Activated B cell treated with CpG ODN at 0.5 μM for 24 hours (primary cell): ENCODE measurements at regions of chr20 and their contacts with region 1.

Region 1: DNA sequence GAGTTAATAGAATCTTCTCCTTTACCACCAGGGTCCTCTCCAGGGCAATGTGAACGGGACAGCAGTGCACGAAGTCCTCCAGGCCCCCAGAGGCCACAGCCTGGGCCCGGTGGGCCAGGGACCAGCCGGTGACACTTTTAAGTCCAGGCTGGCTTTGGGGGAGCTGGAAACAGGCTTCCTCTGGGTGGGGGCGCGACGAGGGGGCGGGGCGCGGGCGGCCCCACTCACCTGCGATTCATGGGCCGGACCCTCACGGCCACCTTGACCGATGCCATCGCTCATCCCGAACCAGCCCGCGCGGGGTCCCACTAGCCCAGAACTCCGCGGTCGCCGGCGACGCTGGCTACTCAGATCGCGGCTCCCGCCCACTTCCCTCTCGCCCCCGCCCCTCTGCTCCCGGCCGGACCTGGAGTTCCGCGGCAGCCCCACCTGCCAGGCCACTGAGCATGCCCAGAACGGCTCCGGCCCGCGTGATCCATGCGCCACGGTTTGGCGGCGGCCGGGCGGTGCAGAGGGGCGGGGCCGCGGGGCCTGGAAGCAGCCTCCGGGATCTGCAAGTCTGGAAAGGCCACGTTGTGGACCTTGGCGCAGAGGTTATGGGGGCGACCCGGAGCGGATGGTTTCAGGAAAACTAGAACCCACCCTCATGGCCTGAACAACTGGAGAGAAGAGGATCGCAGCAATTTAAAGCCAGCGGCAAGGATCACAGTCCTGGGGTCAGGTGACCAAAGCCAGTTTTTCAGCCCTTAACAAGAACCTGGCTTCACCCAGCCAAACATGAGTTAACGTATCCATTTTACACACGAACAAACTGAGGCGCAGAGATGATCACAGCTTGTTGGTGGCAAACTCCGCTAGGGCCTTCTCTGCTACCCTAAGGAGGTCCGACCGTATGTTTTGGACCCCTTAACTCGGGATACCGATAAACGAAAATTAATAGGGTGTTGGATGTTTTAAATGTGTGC is at the start of gene KIF16B:
- DNase-seq: peak; percentile 93
- ATAC-seq: peak; percentile 90
- H3K4me3 Mint-ChIP-seq: peak within 1 kb of the TSS; percentile 94
- H3K27ac Mint-ChIP-seq: peak within 1 kb of the TSS; percentile 69
- H3K4me1 Mint-ChIP-seq: peaks cover 42% of the 10 kb centered on the region
- H3K27me3 Mint-ChIP-seq: no peaks in the 10 kb centered on the region
- CTCF ChIP-seq: no peak
- total RNA-seq, gene KIF16B: 7.2 and 9.1 TPM in 2 replicates

Region 2: DNA sequence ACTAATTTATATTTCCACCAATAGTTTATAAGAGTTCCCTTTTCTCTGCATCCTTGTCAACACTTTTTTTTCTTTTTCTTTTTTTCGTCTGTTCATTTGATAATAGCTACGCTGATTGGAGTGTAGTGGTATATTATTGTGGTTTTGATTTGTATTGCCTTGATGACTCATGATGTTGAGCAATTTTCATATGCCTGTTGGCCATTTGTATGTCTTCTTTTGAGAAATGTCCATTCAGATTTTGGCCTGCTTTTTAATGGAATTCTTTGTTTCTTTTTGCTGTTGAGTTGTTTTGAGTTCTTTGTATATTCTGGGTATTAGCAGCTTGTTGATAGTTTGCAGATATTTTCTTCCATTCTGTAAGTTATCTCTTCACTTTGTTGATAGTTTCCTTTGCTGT is 773.4 kb before region 1 on chr20:
- CTCF ChIA-PET with region 1: no interaction called
- POLR2A ChIA-PET with region 1: no interaction called
- intact Hi-C with region 1: loop called (anchors 10 kb)
- DNase-seq: no peak
- ATAC-seq: no peak
- H3K4me3 Mint-ChIP-seq: no peak overlapping the region
- H3K27ac Mint-ChIP-seq: no peak overlapping the region
- H3K4me1 Mint-ChIP-seq: peaks cover 2% of the 10 kb centered on the region
- H3K27me3 Mint-ChIP-seq: no peaks in the 10 kb centered on the region
- CTCF ChIP-seq: no peak

Region 3: DNA sequence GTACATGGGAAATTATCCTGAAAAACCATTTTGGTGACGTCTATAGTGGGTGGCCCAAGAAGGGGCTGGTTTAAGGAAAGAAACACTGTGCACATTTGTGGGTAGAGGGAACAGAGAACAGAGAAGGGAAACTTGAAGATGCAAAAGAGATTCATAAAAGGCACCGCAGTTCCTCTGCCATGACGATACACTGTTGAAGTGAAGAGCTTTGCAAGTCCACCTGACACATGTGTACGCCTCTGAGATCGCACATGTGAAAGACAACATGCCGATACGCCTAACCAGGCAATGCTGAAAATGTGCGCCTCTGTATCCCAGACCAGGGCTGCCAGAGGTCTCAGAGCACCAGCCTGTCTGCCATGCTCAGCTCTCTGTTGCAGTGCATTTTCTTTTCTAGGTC is 180.9 kb before region 1 on chr20:
- CTCF ChIA-PET with region 1: no interaction called
- POLR2A ChIA-PET with region 1: no interaction called
- intact Hi-C with region 1: loop called (anchors 5 kb)
- DNase-seq: peak; percentile 26
- ATAC-seq: peak; percentile 85
- H3K4me3 Mint-ChIP-seq: peak overlapping the region; percentile 72
- H3K27ac Mint-ChIP-seq: peak overlapping the region; percentile 46
- H3K4me1 Mint-ChIP-seq: peaks cover 40% of the 10 kb centered on the region
- H3K27me3 Mint-ChIP-seq: no peaks in the 10 kb centered on the region
- CTCF ChIP-seq: no peak

Region 4: GRCh38 chr20:16517946-16518783 is 55.1 kb before region 1 on chr20:
- CTCF ChIA-PET with region 1: no interaction called
- POLR2A ChIA-PET with region 1: no interaction called
- intact Hi-C with region 1: loop called (anchors 5 kb)
- DNase-seq: no peak
- ATAC-seq: no peak
- H3K4me3 Mint-ChIP-seq: no peak overlapping the region
- H3K27ac Mint-ChIP-seq: no peak overlapping the region
- H3K4me1 Mint-ChIP-seq: peaks cover 6% of the 10 kb centered on the region
- H3K27me3 Mint-ChIP-seq: no peaks in the 10 kb centered on the region
- CTCF ChIP-seq: peak; percentile 27

Region 5: DNA sequence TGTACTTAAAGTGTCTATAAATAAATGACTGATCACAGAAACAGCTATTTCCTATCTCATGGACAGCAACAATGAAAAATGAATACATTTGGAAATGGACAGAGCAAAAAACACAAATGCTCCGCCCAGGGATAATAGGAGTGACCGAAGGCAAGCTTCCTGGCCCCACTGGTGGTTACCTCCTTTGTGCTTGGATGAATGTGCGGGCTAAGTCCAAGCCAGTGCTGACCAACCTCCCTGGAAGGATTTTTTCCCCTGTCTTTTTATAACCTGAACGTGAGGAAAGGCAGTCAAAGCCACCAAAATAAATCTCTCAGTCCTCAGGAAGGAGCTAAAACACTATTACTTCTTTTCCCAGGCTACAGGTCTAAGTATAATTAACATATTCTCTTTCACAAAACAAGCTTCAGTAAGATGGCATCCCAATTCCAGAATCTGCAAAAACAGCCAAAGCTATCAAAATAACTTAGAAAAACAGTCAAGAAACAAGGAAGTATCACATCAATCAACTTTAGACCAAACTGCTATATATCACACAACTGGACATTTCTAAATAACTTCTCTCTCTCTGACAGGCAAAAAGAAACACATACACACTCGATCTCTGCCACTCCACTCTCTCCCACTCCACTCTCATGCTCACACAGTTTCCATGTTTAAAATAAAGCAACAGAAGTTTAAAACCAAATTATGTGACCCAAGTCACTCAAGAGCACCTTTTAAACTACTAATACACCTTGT is 10.0 kb before region 1 on chr20:
- CTCF ChIA-PET with region 1: no interaction called
- POLR2A ChIA-PET with region 1: no interaction called
- intact Hi-C with region 1: no loop called
- DNase-seq: no peak
- ATAC-seq: no peak
- H3K4me3 Mint-ChIP-seq: no peak overlapping the region
- H3K27ac Mint-ChIP-seq: no peak overlapping the region
- H3K4me1 Mint-ChIP-seq: no peaks in the 10 kb centered on the region
- H3K27me3 Mint-ChIP-seq: no peaks in the 10 kb centered on the region
- CTCF ChIP-seq: no peak

Region 6: GRCh38 chr20:16639027-16639941 is 66.0 kb after region 1 on chr20:
- CTCF ChIA-PET with region 1: no interaction called
- POLR2A ChIA-PET with region 1: no interaction called
- intact Hi-C with region 1: no loop called
- DNase-seq: no peak
- ATAC-seq: no peak
- H3K4me3 Mint-ChIP-seq: no peak overlapping the region
- H3K27ac Mint-ChIP-seq: no peak overlapping the region
- H3K4me1 Mint-ChIP-seq: no peaks in the 10 kb centered on the region
- H3K27me3 Mint-ChIP-seq: peaks cover 9% of the 10 kb centered on the region
- CTCF ChIP-seq: no peak

Region 7: DNA sequence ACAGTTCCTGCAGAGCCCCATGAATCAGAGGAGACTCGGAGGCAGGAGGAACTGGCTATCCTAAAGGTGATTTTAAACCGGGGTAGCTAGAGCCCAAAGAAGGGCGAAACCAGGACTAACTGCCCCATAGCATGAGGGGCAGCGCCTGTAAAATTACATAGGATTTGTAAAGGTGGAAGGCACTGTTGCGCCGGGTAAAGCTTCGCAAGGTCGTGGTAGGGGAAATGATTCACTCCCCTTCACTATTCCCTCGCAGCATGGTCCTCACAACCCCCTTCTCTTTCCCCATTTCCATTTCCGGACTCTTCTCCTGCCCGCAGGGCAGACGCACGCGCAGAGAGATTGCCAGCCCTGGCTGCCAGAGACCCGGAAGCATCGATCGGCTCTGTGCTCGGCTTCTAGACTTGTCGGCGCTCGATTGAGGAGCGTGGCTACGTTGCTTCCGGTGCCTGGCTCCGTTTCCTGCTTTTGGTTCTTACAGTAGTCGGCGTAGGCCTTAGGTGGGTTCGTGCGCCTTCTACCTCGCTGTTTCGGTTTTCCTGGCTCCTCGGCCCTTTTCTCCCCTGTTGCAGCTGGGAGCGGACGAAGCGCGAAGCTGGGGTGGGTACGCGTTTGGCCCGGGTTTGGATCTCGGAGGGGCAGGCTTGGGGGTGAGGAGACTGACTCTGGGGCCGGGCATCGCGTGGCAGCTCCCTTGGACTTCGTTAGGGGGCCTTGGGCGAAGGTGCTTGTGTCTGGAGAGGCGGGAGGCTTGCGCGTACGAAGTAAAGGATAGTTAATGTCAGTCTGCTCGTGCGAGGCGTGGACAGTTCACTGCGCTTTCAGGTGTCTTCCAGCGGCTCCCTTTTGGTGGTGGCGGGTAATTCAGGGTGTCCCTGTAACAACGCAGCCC is 156.5 kb after region 1 on chr20 and contains the start of gene SNRPB2:
- CTCF ChIA-PET with region 1: no interaction called
- POLR2A ChIA-PET with region 1: interaction called, 5 read pairs
- intact Hi-C with region 1: loop called (anchors 1 kb)
- DNase-seq: peak; percentile 76
- ATAC-seq: peak; percentile 97
- H3K4me3 Mint-ChIP-seq: peak within 1 kb of the TSS; percentile 100
- H3K27ac Mint-ChIP-seq: peak within 1 kb of the TSS; percentile 99
- H3K4me1 Mint-ChIP-seq: peaks cover 31% of the 10 kb centered on the region
- H3K27me3 Mint-ChIP-seq: peaks cover 17% of the 10 kb centered on the region
- CTCF ChIP-seq: no peak
- total RNA-seq, gene SNRPB2: 61.1 and 66.3 TPM in 2 replicates